Activated T-helper 2 cell treated with anti-CD3 and anti-CD28 coated beads, Interferon-gamma antibody, Interleukin-2, Interleukin-4, amounts not matched to agents 10 μg/mL and 5 μg/mL and 100 μg/mL, durations not matched to agents 14 hours and 24 hours and 36 hours (primary cell): ENCODE measurements at regions of chr4 and their contacts with region 1.

Region 1: GRCh38 chr4:99563310-99564186 is at the start of gene TRMT10A:
- DNase-seq: peak; percentile 93
- H3K4me3 Mint-ChIP-seq: peak within 1 kb of the TSS; percentile 92
- H3K27ac Mint-ChIP-seq: peak within 1 kb of the TSS; percentile 95
- H3K4me1 Mint-ChIP-seq: peaks cover 12% of the 10 kb centered on the region
- H3K27me3 Mint-ChIP-seq: peaks cover 16% of the 10 kb centered on the region
- total RNA-seq, gene TRMT10A: 7.9 and 8.4 TPM in 2 replicates

Region 2: GRCh38 chr4:98143001-98143899 is 1420.3 kb before region 1 on chr4 and contains the start of gene STPG2:
- intact Hi-C with region 1: loop called (anchors 5 kb)
- DNase-seq: peak; percentile 88
- H3K4me3 Mint-ChIP-seq: peak within 1 kb of the TSS; percentile 83
- H3K27ac Mint-ChIP-seq: peak within 1 kb of the TSS; percentile 90
- H3K4me1 Mint-ChIP-seq: peaks cover 26% of the 10 kb centered on the region
- H3K27me3 Mint-ChIP-seq: peaks cover 13% of the 10 kb centered on the region
- total RNA-seq, gene STPG2: not detected in 2 replicates

Region 3: DNA sequence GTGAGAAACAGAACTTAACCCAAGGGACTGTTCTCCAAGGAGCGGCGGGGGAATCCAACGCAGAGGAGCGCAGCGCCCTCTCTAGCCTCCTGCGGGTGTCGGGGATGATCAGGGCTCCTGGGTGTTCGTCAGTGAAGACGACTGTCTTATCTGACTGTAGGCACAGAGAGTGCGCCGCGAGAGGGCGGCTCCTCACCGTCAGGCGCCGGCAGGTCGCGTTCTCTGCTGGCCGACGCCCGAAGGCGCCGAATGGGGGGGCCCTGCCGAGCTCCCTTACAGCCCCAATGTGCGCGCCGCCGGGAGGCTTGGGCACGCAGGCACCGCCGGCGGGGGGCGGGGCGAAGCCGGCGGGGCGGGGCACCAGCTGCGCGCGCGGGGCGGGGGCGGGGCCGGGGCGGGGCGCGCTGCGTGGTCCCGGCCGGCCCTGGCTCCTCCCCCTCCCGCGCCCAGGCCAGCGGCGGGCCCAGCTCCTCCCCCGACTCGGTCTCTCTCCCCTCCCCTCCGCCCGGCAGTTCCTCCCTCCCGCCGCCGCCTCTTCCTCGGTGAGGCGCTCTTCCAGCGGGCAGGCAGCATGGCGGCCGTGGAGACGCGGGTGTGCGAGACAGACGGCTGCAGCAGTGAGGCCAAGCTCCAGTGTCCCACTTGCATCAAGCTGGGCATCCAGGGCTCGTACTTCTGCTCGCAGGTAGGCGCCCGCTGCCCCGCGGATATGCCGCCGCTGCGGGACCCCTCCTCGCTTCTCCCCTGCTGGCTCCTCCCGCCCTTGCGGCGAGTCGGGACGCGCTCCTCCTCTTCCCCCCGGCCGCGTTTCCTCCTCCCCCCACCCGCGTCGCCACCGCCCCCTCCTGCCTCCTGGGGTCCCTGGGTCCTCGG is 568.1 kb before region 1 on chr4 and contains the start of gene METAP1:
- intact Hi-C with region 1: loop called (anchors 2 kb)
- DNase-seq: peak; percentile 94
- H3K4me3 Mint-ChIP-seq: peak within 1 kb of the TSS; percentile 91
- H3K27ac Mint-ChIP-seq: peak within 1 kb of the TSS; percentile 99
- H3K4me1 Mint-ChIP-seq: peaks cover 26% of the 10 kb centered on the region
- H3K27me3 Mint-ChIP-seq: no peaks in the 10 kb centered on the region
- total RNA-seq, gene METAP1: 58.2 and 58.7 TPM in 2 replicates

Region 4: DNA sequence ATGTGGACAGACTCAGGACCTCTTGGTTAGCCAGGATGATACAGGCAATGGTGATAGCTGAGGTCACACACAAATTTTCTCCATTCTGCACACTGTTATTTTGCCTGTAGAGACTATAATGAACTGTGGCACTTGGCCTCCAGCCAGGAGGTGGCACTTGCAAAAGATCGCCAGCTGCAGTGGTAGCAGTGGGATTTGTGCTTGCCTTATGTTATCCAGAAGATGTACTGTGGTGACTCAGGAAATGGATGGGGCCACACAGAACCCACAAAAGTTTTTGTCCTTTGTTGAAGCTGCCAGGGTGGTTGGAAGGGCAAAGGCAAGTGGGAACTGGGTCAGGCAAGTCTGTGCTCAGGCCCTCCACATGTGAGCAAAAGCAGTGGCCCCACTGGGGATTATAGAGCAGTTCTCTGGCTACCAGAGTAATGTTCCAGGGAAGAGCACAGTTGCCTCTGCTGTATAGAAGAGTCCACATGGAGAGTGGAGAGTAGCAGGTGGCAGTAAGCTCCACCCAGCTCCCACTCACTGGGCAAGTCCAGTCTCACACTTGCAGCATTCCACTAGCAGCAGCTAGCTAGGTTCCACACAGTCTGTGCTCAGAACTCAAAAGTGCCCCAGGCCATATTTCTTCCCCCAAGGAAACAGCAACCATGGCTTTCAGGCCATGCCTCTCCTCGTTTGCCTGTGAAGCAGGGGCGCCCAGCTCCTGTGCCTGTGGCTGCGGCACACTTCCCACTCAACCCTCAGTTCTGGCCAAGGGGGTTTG is 58.6 kb before region 1 on chr4:
- intact Hi-C with region 1: loop called (anchors 1 kb)
- DNase-seq: no peak
- H3K4me3 Mint-ChIP-seq: no peak overlapping the region
- H3K27ac Mint-ChIP-seq: no peak overlapping the region
- H3K4me1 Mint-ChIP-seq: peaks cover 32% of the 10 kb centered on the region
- H3K27me3 Mint-ChIP-seq: peaks cover 2% of the 10 kb centered on the region

Region 5: GRCh38 chr4:99808260-99808857 is 244.8 kb after region 1 on chr4:
- intact Hi-C with region 1: loop called (anchors 1 kb)
- DNase-seq: peak; percentile 61
- H3K4me3 Mint-ChIP-seq: no peak overlapping the region
- H3K27ac Mint-ChIP-seq: no peak overlapping the region
- H3K4me1 Mint-ChIP-seq: peaks cover 24% of the 10 kb centered on the region
- H3K27me3 Mint-ChIP-seq: peaks cover 10% of the 10 kb centered on the region

Region 6: DNA sequence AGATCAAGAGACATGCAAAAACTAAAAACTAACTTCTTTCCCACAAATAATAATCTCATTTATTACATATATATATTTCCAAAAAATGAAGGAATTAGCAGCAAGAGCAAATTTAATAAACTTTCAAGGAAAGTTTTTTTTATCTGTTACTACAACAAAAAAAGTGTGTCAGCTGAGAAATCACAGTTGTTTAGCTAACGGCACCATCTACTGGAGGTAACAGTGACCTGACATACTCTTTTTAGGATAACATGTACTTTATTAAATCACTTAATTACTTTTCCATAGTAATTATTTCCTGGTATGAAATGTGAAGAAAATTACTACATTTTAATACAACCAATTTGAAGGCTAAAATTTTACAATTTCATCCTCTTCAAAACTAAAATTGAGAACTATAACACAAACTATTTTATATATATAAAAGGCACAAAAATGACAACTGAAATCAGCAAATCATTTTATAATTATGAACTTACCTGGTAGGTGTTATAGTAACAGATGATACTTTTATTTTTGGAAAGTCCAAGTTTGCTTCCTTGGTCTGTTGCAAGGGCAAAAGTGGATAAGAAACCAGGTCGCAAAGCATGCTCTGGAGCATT is 321.6 kb after region 1 on chr4:
- intact Hi-C with region 1: loop called (anchors 1 kb)
- DNase-seq: no peak
- H3K4me3 Mint-ChIP-seq: no peak overlapping the region
- H3K27ac Mint-ChIP-seq: no peak overlapping the region
- H3K4me1 Mint-ChIP-seq: no peaks in the 10 kb centered on the region
- H3K27me3 Mint-ChIP-seq: no peaks in the 10 kb centered on the region

Region 7: GRCh38 chr4:99949034-99949998 is 385.8 kb after region 1 on chr4:
- intact Hi-C with region 1: loop called (anchors 1 kb)
- DNase-seq: peak; percentile 87
- H3K4me3 Mint-ChIP-seq: no peak overlapping the region
- H3K27ac Mint-ChIP-seq: no peak overlapping the region
- H3K4me1 Mint-ChIP-seq: peaks cover 31% of the 10 kb centered on the region
- H3K27me3 Mint-ChIP-seq: no peaks in the 10 kb centered on the region